ENCODE measurements at regions of chr4 and their contacts with region 1.

Region 1: GRCh38 chr4:37845201-37845600 is 18.7 kb downstream of the PGM2 start:
- DNase-seq: no peak
- H3K4me3 ChIP-seq: no peak overlapping the region
- H3K27ac ChIP-seq: no peak overlapping the region
- H3K4me1 ChIP-seq: no peaks in the 10 kb centered on the region
- H3K27me3 ChIP-seq: no peaks in the 10 kb centered on the region
- CTCF ChIP-seq: no peak

Region 2: DNA sequence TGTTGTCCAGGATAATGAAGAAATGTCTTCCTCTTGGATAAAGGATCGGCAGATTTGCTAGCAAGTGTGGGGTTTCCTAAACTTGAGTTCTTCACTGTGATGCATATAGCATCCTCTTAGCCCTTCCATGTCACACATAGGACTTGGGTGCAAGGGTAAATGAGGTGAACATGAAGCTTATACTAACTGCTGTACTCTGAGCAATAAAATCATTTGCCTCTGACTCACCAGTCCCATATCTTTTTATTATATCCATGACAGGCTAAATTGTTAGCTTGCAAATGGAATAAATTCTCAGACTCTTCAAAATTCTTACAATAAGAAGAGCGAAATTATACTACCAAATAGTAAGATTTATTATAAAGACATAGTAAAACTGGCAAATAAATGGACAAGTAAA is 31.0 kb after region 1 on chr4:
- CTCF ChIA-PET with region 1: no interaction called
- POLR2A ChIA-PET with region 1: interaction called, 16 read pairs
- intact Hi-C with region 1: no loop called
- DNase-seq: no peak
- H3K4me3 ChIP-seq: no peak overlapping the region
- H3K27ac ChIP-seq: no peak overlapping the region
- H3K4me1 ChIP-seq: no peaks in the 10 kb centered on the region
- H3K27me3 ChIP-seq: no peaks in the 10 kb centered on the region
- CTCF ChIP-seq: no peak